MCF 10A (cell line): ENCODE measurements at regions of chr5 and their contacts with region 1.

Region 1: DNA sequence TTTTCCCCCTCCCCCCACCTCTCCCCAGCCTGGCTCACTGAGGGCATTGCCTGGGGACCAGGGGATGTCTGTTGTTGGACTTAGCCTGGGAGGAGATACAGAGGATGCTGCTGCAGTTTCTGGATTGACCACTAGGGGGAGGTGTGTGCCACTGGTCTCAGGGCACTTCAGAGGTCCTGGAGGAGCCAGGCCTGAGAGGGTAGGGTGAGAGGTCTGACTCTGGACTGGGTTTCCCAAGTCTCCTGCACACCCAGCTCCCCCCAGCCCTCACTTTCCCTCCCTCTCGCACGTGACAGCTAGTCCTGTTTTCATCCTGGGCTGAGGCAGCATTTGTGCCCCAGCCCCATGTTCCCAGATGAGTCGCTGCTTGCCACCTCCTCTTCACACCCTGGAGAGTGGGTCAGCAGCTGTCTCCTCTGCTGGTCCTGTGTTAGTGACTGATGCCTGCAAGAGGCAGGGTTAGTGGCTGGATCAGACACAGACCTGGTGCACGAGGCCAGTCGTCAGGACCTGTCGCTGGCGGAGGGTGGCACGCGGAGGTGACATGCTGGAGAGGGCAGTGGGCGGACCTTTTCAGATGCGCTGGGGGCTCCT is 4.4 kb downstream of the IL3 start:
- DNase-seq: peak; percentile 88
- H3K4me3 Mint-ChIP-seq: no peak overlapping the region
- H3K27ac Mint-ChIP-seq: no peak overlapping the region
- H3K4me1 Mint-ChIP-seq: peaks cover 5% of the 10 kb centered on the region
- H3K27me3 Mint-ChIP-seq: no peaks in the 10 kb centered on the region
- CTCF ChIP-seq: peak; percentile 97

Region 2: GRCh38 chr5:131423056-131423455 is 641.8 kb before region 1 on chr5:
- CTCF ChIA-PET with region 1: no interaction called
- POLR2A ChIA-PET with region 1: no interaction called
- intact Hi-C with region 1: loop called (anchors 1 kb)
- DNase-seq: peak; percentile 38
- H3K4me3 Mint-ChIP-seq: no peak overlapping the region
- H3K27ac Mint-ChIP-seq: no peak overlapping the region
- H3K4me1 Mint-ChIP-seq: no peaks in the 10 kb centered on the region
- H3K27me3 Mint-ChIP-seq: no peaks in the 10 kb centered on the region
- CTCF ChIP-seq: peak; percentile 50

Region 3: GRCh38 chr5:132050136-132050535 is 14.7 kb before region 1 on chr5:
- CTCF ChIA-PET with region 1: interaction called, 45 read pairs
- POLR2A ChIA-PET with region 1: no interaction called
- intact Hi-C with region 1: no loop called
- DNase-seq: no peak
- H3K4me3 Mint-ChIP-seq: no peak overlapping the region
- H3K27ac Mint-ChIP-seq: no peak overlapping the region
- H3K4me1 Mint-ChIP-seq: no peaks in the 10 kb centered on the region
- H3K27me3 Mint-ChIP-seq: peaks cover 28% of the 10 kb centered on the region
- CTCF ChIP-seq: no peak

Region 4: DNA sequence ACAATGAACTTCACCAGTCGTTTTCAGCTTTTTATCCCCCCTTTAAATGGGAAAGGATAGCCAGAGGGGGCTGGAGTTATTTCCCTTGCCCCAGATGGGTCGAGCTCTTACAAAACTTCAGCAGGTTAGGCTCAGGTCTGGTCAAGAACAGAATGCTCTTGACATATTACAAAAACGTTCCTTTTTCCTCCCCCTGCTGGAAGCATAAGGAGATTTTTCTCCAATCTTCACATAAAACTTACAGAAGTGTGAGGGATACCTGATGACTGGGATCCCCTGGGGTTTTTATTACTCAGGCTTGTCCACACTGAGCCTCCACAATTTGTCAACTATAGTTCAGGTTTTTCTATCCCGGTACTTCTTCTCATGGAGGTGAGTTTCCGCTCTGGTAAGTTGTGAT is 69.5 kb after region 1 on chr5:
- CTCF ChIA-PET with region 1: interaction called, 61 read pairs
- POLR2A ChIA-PET with region 1: interaction called, 3 read pairs
- intact Hi-C with region 1: loop called (anchors 1 kb)
- DNase-seq: peak; percentile 67
- H3K4me3 Mint-ChIP-seq: no peak overlapping the region
- H3K27ac Mint-ChIP-seq: no peak overlapping the region
- H3K4me1 Mint-ChIP-seq: peaks cover 31% of the 10 kb centered on the region
- H3K27me3 Mint-ChIP-seq: no peaks in the 10 kb centered on the region
- CTCF ChIP-seq: peak; percentile 47

Region 5: DNA sequence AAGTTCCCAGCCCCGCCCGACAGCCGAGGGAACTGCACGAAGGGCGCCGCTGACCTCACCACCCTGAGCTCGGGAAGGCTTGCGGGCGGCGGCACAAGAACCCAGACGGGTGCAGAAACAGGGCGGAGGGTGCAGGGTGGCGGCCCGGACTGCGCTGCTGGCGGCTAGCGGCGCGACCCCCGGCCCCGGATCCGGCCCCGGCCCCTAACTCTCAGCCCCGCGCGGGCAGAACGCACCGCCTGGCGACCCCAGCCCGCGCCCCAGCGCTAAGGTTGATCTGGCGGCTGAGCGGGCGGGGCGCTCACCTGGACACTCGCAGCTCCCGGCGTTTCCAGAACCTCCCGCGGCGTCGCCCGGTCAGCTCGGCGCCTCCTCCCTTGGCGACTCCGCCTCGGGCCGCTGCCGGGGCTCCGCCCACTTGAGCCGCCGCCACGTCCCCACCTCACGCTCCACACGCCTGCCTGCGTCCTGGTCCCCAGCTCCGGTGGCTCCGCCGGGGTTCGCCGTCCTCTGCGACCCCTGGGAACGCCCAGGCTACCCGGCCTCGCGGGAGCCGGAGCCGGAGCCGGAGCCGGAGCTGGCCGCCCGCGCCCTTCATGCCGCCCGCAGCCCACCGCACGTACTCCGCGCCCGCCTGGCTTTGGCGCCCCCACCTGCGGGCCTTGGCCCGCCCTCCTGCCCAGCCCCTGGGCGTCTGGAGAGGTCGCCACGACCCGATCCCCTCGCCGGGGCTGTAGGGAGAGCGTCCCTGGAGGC is 162.8 kb after region 1 on chr5 and contains the start of gene P4HA2:
- CTCF ChIA-PET with region 1: interaction called, 7 read pairs
- POLR2A ChIA-PET with region 1: no interaction called
- intact Hi-C with region 1: loop called (anchors 1 kb)
- DNase-seq: peak; percentile 86
- H3K4me3 Mint-ChIP-seq: peak within 1 kb of the TSS; percentile 74
- H3K27ac Mint-ChIP-seq: no peak within 1 kb of the TSS
- H3K4me1 Mint-ChIP-seq: peaks cover 32% of the 10 kb centered on the region
- H3K27me3 Mint-ChIP-seq: no peaks in the 10 kb centered on the region
- CTCF ChIP-seq: peak; percentile 21
- total RNA-seq, gene P4HA2: 53.1 and 91.1 TPM in 2 replicates

Region 6: DNA sequence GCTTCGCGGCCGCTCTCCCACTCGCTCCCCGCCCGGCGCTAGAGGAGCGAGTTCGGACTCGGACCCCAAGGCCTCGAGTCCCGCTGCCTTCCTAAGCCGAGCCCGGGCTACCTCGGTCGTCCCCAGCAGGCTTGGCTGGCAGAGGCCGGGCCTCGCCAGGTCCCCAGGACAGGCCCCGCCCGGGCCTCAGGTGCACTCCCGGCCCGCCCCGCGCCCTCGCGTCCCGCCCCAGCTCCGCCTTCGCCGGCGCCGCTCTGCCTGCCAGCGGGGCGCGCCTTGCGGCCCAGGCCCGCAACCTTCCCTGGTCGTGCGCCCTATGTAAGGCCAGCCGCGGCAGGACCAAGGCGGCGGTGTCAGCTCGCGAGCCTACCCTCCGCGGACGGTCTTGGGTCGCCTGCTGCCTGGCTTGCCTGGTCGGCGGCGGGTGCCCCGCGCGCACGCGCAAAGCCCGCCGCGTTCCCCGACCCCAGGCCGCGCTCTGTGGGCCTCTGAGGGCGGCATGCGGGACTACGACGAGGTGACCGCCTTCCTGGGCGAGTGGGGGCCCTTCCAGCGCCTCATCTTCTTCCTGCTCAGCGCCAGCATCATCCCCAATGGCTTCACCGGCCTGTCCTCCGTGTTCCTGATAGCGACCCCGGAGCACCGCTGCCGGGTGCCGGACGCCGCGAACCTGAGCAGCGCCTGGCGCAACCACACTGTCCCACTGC is 304.8 kb after region 1 on chr5 and contains the start of gene SLC22A5:
- CTCF ChIA-PET with region 1: interaction called, 4 read pairs
- POLR2A ChIA-PET with region 1: no interaction called
- intact Hi-C with region 1: loop called (anchors 1 kb)
- DNase-seq: peak; percentile 84
- H3K4me3 Mint-ChIP-seq: peak within 1 kb of the TSS; percentile 79
- H3K27ac Mint-ChIP-seq: peak within 1 kb of the TSS; percentile 39
- H3K4me1 Mint-ChIP-seq: peaks cover 44% of the 10 kb centered on the region
- H3K27me3 Mint-ChIP-seq: no peaks in the 10 kb centered on the region
- CTCF ChIP-seq: no peak
- total RNA-seq, gene SLC22A5: 122 and 167 TPM in 2 replicates